Esophagus squamous epithelium (tissue), 5 donors: ENCODE measurements at regions of chr17 and their contacts with region 1.

Region 1: DNA sequence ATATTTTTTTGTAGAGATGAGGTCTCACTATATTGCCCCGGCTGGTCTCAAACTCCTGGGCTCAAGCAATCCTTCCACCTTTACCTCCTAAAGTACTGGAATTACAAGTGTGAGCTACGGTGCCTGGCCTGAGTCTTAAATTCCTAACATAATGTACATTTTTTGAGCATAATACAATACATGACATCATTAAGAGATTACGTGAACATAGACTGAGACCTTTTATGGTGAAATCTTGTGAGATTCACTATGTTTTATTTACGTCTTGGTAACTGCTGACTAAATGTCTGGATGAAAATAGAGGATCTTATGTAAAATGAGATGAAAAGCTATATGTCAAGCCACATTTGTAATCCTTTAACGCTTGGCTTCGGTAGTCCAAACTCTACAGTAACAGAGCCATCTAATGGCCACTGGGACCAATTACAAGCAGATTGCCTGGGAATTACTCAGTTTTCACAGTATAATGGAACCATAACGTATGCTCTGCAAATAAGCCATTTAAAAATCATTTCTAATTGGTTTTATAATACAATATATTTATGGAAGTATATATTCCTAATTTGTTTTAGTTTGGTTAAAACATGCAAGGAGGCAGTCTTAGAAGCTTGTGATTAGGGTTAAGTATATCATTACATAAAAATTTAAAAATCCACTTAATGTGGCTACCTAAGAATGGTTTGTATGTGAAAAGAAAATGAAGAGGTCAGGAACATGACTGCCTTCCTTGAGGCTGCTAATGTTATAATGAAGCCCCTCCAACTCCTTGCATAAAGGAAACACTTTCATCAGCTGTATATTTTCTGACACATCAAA is 8.1 kb upstream of the EFCAB13 start:
- DNase-seq: no peak
- H3K4me3 ChIP-seq: no peak overlapping the region
- H3K27ac ChIP-seq: peak overlapping the region in 3 of 4 donors; percentile 65 to 70 (median 67)
- H3K4me1 ChIP-seq: peaks cover 0 to 22% (median 0%) of the 10 kb centered on the region in 3 donors
- H3K27me3 ChIP-seq: no peaks in the 10 kb centered on the region
- CTCF ChIP-seq: peak; percentile 47 to 85 (median 72)
- POLR2A ChIP-seq: no peak

Region 2: DNA sequence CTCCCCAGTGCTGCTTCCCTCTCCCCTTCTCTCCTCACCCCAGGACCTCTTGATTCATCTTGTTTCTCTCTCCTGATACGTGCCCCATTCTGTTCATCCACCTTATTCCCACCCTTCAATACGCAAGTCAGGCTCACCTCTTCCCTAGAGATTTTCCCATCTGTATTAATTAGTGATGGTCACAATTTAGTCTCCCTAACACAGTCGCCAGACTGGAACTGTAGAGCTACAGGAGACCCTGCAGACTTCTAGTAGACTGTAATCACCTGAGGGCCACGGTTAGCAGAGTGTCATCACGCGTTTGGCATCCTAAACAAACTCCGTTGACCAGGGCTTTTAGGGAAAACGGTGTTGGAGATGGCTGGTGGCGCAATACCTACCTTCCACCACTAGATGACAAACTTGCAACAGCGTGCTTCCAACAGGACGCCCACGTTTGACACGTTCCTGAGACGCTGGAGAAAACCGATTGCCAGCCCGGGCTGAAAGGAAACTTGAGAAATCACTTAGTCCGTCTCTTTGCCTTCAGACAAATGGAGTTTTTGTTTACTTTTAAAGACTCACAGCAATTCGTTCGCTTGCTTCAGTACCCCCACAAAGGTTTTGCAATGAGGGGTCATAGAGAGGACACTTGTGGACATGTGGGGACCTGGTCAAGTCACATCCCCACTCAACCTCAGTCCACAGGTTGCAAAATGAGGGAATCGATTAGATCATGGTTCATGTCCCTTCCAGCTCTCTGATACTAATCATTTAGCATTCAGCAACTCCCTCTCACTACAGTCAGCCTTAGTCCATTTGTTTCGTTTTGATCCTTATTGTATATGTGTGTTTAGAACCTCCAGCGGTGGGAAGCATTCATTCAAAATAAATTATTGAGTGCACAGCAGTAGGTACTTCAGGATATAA is 85.9 kb before region 1 on chr17:
- intact Hi-C with region 1: loop called (anchors 5 kb)
- DNase-seq: no peak
- H3K4me3 ChIP-seq: peak overlapping the region in 3 of 4 donors; percentile 23 to 31 (median 30)
- H3K27ac ChIP-seq: peak overlapping the region in 3 of 4 donors; percentile 27 to 59 (median 44)
- H3K4me1 ChIP-seq: peaks cover 0 to 36% (median 26%) of the 10 kb centered on the region in 3 donors
- H3K27me3 ChIP-seq: no peaks in the 10 kb centered on the region
- CTCF ChIP-seq: peak; percentile 90 to 97 (median 96)
- POLR2A ChIP-seq: no peak

Region 3: DNA sequence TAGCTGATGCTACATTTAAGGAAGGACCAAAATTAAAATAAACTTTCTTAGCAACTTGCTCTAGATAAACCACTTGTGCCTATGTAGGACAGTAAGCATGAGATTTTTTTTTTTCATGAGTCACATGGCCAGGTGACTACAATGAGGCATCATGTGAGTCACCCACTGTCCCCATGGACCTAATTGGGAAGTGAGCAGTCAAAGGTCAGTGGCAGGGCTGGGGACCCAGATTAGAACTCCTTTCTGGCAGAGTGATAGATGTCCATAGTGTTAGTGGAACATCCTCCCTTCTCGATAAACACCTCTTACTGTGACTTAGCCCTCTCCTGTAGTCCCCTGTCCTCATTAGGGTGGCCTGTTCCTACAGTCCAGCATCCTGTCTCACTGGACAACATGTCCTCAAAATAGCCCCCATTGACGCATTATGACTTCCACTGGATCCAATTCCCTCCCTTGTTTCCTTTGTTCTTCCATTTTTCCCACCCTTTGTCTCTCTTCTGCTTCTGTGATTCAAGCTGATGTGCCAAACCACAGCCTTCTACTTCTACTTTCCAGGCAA is 49.6 kb before region 1 on chr17:
- intact Hi-C with region 1: no loop called
- DNase-seq: no peak
- H3K4me3 ChIP-seq: no peak overlapping the region
- H3K27ac ChIP-seq: peak overlapping the region in 1 of 4 donors; percentile 42
- H3K4me1 ChIP-seq: peaks cover 0 to 14% (median 14%) of the 10 kb centered on the region in 3 donors
- H3K27me3 ChIP-seq: peaks cover 0 to 5% (median 0%) of the 10 kb centered on the region in 4 donors
- CTCF ChIP-seq: no peak
- POLR2A ChIP-seq: no peak

Region 4: GRCh38 chr17:47368262-47368661 is 52.6 kb after region 1 on chr17:
- intact Hi-C with region 1: no loop called
- DNase-seq: no peak
- H3K4me3 ChIP-seq: no peak overlapping the region
- H3K27ac ChIP-seq: no peak overlapping the region
- H3K4me1 ChIP-seq: peaks cover 0 to 16% (median 0%) of the 10 kb centered on the region in 3 donors
- H3K27me3 ChIP-seq: no peaks in the 10 kb centered on the region
- CTCF ChIP-seq: no peak
- POLR2A ChIP-seq: no peak